Stomach (tissue), 19 donors: ENCODE measurements at regions of chr14 and their contacts with region 1.

Region 1: DNA sequence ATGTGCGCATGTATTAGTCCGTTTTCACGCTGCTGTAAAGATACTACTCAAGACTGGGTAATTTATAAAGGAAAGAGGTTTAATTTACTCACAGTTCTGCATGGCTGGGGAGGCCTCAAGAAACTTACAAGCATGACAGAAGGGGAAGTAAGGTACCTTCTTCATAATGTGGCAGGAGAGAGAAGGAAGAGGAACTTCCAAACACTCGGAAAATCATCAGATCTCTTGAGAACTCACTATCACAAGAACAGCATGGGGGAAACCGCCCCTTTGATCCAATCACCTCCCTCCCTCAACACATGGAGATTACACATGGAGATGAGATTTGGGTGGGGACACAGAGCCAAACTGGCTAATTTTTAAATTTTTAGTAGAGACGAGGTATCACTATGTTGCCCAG is 41.8 kb upstream of the SNX6 start:
- DNase-seq: no peak
- H3K4me3 ChIP-seq: no peak overlapping the region
- H3K27ac ChIP-seq: no peak overlapping the region
- H3K4me1 ChIP-seq: peaks cover 0 to 3% (median 0%) of the 10 kb centered on the region in 4 donors
- H3K27me3 ChIP-seq: no peaks in the 10 kb centered on the region
- CTCF ChIP-seq: no peak
- EP300 ChIP-seq: no peak
- POLR2A ChIP-seq: no peak

Region 2: DNA sequence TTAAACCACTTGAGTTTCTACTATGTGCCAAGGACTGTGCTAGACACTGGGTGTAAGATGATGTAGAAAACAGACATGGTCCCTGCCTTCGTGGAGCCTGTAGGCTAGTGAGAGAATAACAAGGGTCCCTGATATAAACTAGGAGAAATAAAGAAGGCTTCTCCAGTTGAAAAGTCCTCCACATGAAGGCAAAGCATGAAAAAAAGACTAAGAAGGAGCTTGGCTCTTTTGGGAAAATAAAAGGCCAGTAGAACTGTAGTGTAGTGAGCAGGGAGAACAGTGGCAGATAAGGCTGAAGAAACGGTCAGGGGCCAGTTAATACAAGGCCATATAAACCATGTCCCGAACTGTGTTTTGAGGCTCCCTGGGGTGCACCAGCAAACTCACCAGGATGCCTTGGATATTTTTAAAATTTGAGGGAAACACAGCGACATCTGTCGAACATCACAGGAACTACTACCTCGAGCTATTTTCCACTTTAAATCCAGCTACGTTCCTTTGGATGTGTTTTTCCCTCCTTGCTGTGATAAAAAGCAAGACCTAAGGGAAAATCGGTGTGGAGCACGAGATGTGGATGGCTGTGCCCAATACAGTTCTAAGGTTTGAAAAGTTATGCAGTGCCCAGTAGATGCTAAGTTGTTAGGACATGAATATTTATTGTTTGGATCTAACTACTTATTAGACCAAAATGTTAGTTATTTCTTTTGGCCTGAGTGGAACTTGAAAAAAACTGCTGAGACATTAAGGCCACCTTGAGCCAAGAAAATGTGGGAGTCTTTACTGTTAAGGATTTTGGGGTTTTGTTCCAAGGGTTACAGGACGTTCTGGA is 51.2 kb after region 1 on chr14:
- intact Hi-C with region 1: loop called (anchors 5 kb)
- DNase-seq: peak; percentile 32 to 76
- H3K4me3 ChIP-seq: no peak overlapping the region
- H3K27ac ChIP-seq: no peak overlapping the region
- H3K4me1 ChIP-seq: peaks cover 6 to 7% (median 7%) of the 10 kb centered on the region in 4 donors
- H3K27me3 ChIP-seq: no peaks in the 10 kb centered on the region
- CTCF ChIP-seq: peak in 5 of 7 experiments; percentile 68 to 80 (median 75)
- EP300 ChIP-seq: no peak
- POLR2A ChIP-seq: no peak